ENCODE measurements at regions of chr7 and their contacts with region 1.

Region 1: GRCh38 chr7:40604601-40605438 is 470.0 kb downstream of the SUGCT start:
- DNase-seq: peak in 3 of 14 experiments; percentile 2 to 26 (median 25)
- ATAC-seq: no peak
- H3K4me3 ChIP-seq: no peak overlapping the region
- H3K4me3 Mint-ChIP-seq: no peak overlapping the region
- H3K27ac ChIP-seq: no peak overlapping the region
- H3K27ac Mint-ChIP-seq: no peak overlapping the region
- H3K4me1 ChIP-seq: no peaks in the 10 kb centered on the region
- H3K4me1 Mint-ChIP-seq: no peaks in the 10 kb centered on the region
- H3K27me3 ChIP-seq: no peaks in the 10 kb centered on the region
- H3K27me3 Mint-ChIP-seq: peaks cover 5% of the 10 kb centered on the region
- CTCF ChIP-seq: no peak

Region 2: GRCh38 chr7:40232242-40232893 is 372.5 kb before region 1 on chr7:
- CTCF ChIA-PET with region 1: no interaction called
- POLR2A ChIA-PET with region 1: no interaction called
- intact Hi-C with region 1: loop called in 1 of 2 experiments (anchors 10 kb)
- DNase-seq: peak in 3 of 14 experiments; percentile 7 to 35 (median 30)
- ATAC-seq: no peak
- H3K4me3 ChIP-seq: no peak overlapping the region
- H3K4me3 Mint-ChIP-seq: no peak overlapping the region
- H3K27ac ChIP-seq: no peak overlapping the region
- H3K27ac Mint-ChIP-seq: no peak overlapping the region
- H3K4me1 ChIP-seq: no peaks in the 10 kb centered on the region
- H3K4me1 Mint-ChIP-seq: peaks cover 6% of the 10 kb centered on the region
- H3K27me3 ChIP-seq: no peaks in the 10 kb centered on the region
- H3K27me3 Mint-ChIP-seq: no peaks in the 10 kb centered on the region
- CTCF ChIP-seq: peak; percentile 14

Region 3: DNA sequence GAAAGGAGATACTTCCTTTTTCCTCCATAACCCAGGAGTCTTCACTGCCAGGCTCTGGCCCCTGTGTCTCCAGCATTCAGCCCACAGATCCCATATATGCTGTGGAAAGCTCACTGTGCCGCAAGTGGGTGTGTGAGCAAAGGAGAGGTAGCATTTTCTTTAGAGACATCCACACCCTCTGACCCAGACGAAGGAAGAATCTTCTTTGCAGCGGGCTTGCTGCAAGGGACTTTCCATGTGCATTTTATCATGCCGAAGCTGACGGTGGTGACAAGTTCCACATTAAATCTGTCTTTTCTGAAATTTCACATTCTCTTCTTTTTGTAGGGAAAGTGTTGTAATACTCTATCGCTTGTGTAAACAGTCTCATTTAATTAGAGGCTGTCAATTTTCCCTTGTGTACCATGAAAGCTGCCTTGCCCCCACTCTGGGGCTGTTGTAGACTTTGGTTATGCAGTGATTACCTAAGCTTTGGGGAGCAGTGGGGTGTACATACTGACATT is 60.5 kb before region 1 on chr7:
- CTCF ChIA-PET with region 1: no interaction called
- POLR2A ChIA-PET with region 1: no interaction called
- intact Hi-C with region 1: no loop called
- DNase-seq: no peak
- ATAC-seq: no peak
- H3K4me3 ChIP-seq: no peak overlapping the region
- H3K4me3 Mint-ChIP-seq: no peak overlapping the region
- H3K27ac ChIP-seq: no peak overlapping the region
- H3K27ac Mint-ChIP-seq: no peak overlapping the region
- H3K4me1 ChIP-seq: no peaks in the 10 kb centered on the region
- H3K4me1 Mint-ChIP-seq: no peaks in the 10 kb centered on the region
- H3K27me3 ChIP-seq: no peaks in the 10 kb centered on the region
- H3K27me3 Mint-ChIP-seq: no peaks in the 10 kb centered on the region
- CTCF ChIP-seq: no peak

Region 4: DNA sequence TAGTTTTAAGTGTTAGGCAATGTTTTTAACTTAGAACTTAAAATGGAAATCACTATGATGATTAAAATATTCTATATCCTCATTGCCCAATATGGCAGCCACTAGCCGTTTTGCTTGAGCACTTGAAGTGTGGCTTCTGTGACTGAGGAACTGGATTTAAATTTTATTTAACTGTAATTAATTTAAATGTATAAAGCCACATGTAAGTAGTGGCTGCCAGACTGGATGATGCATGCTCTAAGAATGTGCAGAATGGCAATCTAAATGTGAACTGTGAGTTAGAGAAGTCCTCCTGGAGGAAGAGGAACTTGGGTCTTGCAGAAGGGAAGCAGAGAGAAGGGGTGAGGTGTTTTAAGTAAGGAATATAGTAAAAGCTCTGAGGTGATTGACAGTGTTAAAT is 18.6 kb before region 1 on chr7:
- CTCF ChIA-PET with region 1: no interaction called
- POLR2A ChIA-PET with region 1: no interaction called
- intact Hi-C with region 1: no loop called
- DNase-seq: no peak
- ATAC-seq: no peak
- H3K4me3 ChIP-seq: no peak overlapping the region
- H3K4me3 Mint-ChIP-seq: no peak overlapping the region
- H3K27ac ChIP-seq: no peak overlapping the region
- H3K27ac Mint-ChIP-seq: no peak overlapping the region
- H3K4me1 ChIP-seq: no peaks in the 10 kb centered on the region
- H3K4me1 Mint-ChIP-seq: no peaks in the 10 kb centered on the region
- H3K27me3 ChIP-seq: no peaks in the 10 kb centered on the region
- H3K27me3 Mint-ChIP-seq: no peaks in the 10 kb centered on the region
- CTCF ChIP-seq: no peak